CD4-positive, alpha-beta memory T cell (primary cell): ENCODE measurements at regions of chr1 and their contacts with region 1.

Region 1: DNA sequence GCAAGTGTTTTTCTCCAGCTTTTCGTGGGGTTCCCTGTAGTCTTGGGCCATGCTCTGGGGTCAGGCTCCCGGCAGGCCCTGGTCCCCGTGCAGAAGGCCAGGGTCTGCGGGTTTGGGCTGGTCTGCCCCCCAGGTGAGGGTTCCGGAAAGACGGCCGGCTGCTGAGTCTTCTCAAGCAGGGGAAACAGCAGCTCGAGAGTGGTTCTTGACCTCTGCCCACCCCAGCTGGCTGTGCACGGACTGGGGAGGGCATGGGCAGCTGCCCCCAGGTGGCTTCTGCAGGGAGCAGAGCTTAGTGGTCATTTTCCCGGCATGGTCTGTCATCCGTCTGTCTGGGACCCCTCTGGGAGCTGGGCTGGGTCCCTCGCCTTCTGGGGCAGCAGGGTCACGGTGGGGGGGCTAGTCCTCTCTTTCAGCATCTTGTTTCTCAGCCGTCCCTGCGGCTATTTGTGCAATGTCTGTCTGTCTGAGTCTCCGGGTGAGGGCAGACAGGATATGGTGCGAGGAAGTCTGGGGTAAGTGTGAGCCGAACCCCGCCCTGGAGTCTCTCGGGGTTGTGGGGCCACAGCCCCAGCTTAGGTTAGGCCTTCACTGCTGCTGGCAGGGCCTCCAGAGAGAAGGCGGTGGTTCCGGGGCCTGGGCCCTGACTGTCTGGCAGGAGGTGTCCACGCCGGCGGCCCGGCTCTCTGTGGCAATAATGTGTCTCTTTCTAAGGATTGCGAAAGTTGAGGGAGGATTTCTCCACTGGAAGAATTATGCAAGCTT is 6.1 kb downstream of the SKI start:
- DNase-seq: peak; percentile 78 to 93 (median 80)
- H3K4me3 ChIP-seq: peak overlapping the region; percentile 90 to 97
- H3K4me3 Mint-ChIP-seq: peak overlapping the region; percentile 92 to 99 (median 96)
- H3K27ac ChIP-seq: peak overlapping the region; percentile 84
- H3K27ac Mint-ChIP-seq: peak overlapping the region; percentile 94 to 100 (median 99)
- H3K4me1 ChIP-seq: peaks cover 81% of the 10 kb centered on the region
- H3K4me1 Mint-ChIP-seq: peaks cover 45 to 81% (median 61%) of the 10 kb centered on the region in 4 donors
- H3K27me3 ChIP-seq: no peaks in the 10 kb centered on the region
- H3K27me3 Mint-ChIP-seq: peaks cover 0 to 4% of the 10 kb centered on the region in 2 donors

Region 2: GRCh38 chr1:2205191-2205952 is 28.8 kb before region 1 on chr1:
- CTCF ChIA-PET with region 1: interaction called, 4 read pairs
- POLR2A ChIA-PET with region 1: interaction called, 83 read pairs
- intact Hi-C with region 1: loop called (anchors 2 kb)
- DNase-seq: peak; percentile 90 to 95 (median 91)
- H3K4me3 ChIP-seq: peak overlapping the region; percentile 6 to 47
- H3K4me3 Mint-ChIP-seq: peak overlapping the region; percentile 48 to 71 (median 68)
- H3K27ac ChIP-seq: peak overlapping the region; percentile 38
- H3K27ac Mint-ChIP-seq: peak overlapping the region in 3 of 7 donors; percentile 35 to 79 (median 62)
- H3K4me1 ChIP-seq: peaks cover 26% of the 10 kb centered on the region
- H3K4me1 Mint-ChIP-seq: peaks cover 0 to 15% (median 3%) of the 10 kb centered on the region in 4 donors
- H3K27me3 ChIP-seq: no peaks in the 10 kb centered on the region
- H3K27me3 Mint-ChIP-seq: no peaks in the 10 kb centered on the region

Region 3: DNA sequence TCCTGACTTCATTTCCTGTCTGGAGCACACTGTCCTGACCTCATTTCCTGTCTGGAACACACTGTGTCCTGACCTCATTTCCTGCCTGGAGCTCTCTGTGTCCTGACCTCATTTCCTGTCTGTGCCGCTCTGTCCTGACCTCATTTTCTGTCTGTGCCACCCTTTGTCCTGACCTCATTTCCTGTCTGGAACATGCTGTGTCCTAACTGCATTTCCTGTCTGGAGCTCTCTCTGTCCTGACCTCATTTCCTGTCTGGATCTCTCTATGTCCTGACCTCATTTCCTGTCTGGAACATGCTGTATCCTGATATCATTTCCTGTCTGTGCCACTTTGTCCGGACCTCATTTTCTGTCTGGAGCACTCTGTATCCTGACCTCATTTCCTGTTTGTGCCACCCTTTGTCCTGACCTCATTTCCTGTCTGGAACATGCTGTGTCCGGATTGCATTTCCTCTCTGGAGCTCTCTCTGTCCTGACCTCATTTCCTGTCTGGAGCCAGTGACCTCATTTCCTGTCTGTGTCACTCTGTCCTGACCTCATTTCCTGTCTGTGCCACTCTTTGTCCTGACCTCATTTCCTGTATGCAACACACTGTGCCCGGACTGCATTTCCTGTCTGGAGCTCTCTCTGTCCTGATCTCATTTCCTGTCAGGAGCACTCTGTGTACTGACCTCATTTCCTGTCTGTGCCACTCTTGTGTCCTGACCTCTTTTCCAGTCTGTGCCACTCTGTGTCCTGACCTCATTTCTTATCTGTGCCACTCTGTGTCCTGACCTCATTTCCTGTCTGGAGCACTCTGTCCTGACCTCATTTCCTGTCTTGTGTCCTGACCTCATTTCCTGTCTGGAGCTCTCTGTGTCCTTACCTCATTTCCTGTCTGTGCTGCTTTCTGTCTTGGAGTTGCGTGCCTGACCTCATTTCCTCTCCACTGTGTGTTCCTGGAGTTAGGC is 21.5 kb after region 1 on chr1:
- CTCF ChIA-PET with region 1: interaction called, 8 read pairs
- POLR2A ChIA-PET with region 1: interaction called, 454 read pairs
- intact Hi-C with region 1: loop called (anchors 1 kb)
- DNase-seq: peak; percentile 87 to 96 (median 92)
- H3K4me3 ChIP-seq: no peak overlapping the region
- H3K4me3 Mint-ChIP-seq: no peak overlapping the region
- H3K27ac ChIP-seq: peak overlapping the region; percentile 95
- H3K27ac Mint-ChIP-seq: no peak overlapping the region
- H3K4me1 ChIP-seq: peaks cover 87% of the 10 kb centered on the region
- H3K4me1 Mint-ChIP-seq: peaks cover 31 to 59% (median 40%) of the 10 kb centered on the region in 4 donors
- H3K27me3 ChIP-seq: no peaks in the 10 kb centered on the region
- H3K27me3 Mint-ChIP-seq: no peaks in the 10 kb centered on the region

Region 4: DNA sequence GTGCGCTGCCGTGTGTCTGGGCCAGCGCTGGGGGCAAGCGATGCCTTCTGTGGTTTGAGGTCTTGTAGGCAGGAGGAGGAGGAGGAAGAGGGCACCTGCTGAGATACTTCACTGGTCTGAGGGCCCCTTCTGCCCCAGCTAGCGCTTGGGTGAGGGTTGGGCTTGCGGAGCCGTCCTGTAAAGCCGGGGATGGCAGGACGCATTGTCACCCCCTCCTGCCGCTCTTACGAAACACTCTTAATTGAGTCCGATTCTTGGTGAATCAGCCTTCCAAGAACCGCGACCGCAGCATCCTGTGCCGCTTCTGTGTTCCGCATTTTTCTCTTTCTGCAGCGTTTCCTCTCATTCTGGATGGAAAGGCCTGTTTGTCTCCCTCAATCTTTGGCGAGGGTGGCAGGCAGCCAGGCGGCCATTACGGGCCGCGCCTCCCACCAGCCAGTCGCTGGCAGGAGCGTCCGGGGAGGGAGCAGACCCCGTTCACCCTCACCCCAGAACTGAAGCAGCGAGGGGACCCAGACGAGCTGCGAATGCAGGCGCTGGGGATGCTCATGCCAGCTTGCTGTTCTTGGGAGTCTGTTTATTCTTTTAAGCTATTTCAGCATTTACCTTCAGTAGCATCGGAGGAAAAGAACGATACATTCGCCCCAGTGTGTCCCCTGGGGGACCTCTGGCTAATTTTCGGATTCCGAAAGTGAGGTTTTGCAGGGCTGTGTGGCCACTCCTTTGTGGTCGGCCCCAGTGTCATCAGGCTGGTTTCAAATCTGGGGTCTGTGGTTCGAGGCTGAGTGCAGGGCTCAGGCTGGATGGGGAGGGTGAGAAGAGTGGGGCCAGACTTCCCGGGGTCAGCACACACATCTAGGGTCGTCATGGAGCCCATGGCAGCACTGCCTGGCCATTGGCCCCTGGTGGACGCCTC is 56.7 kb after region 1 on chr1:
- CTCF ChIA-PET with region 1: interaction called, 4 read pairs
- POLR2A ChIA-PET with region 1: interaction called, 71 read pairs
- intact Hi-C with region 1: loop called (anchors 2 kb)
- DNase-seq: peak; percentile 73 to 91 (median 79)
- H3K4me3 ChIP-seq: peak overlapping the region; percentile 32 to 69
- H3K4me3 Mint-ChIP-seq: peak overlapping the region; percentile 86 to 95 (median 88)
- H3K27ac ChIP-seq: peak overlapping the region; percentile 73
- H3K27ac Mint-ChIP-seq: peak overlapping the region; percentile 92 to 99 (median 98)
- H3K4me1 ChIP-seq: peaks cover 91% of the 10 kb centered on the region
- H3K4me1 Mint-ChIP-seq: peaks cover 39 to 97% (median 78%) of the 10 kb centered on the region in 4 donors
- H3K27me3 ChIP-seq: no peaks in the 10 kb centered on the region
- H3K27me3 Mint-ChIP-seq: no peaks in the 10 kb centered on the region

Region 5: DNA sequence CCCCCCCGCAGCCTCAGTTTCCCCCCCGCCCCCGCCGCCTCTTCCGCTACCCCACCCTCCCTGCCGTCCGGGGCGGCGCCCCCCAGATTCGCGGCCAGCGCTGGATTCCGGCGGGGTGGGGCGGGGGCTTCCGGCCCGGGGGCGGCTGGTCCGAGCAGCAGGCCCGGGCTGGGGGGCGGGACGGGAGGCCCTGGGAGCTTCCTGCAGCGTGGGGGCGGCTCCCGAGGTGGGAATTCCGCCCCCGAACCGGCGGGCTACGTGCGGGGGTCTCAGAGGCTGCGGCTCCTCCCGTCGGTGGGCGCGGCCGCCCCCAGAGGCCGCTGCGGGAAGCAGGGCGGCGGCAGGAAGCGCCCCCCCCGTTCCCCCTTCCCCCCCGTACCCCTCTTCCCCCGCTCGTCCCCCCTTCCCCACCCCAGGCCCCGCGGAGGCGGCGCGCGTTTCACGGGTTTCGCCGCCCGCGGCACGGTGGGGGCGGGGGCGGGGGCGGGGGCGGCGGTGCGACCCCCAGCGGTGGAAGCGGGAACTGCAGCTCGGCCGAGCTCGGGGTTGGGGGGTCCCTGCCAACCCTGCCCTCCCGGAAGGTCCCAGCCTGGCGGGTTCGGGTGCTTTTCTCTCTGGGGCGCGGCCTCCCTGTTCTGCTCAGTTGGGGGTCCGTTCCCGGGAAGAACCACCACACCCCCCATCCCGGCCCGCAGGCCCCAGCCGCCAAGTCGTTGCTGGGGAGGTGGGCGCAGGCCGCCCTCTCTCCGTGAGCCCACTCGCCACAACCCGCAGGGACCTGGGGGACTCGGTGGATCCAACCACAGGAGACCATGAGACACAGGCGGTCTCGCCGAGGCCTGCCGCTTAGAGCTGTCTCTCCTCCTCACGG is 80.9 kb after region 1 on chr1:
- CTCF ChIA-PET with region 1: interaction called, 8 read pairs
- POLR2A ChIA-PET with region 1: interaction called, 88 read pairs
- intact Hi-C with region 1: loop called (anchors 2 kb)
- DNase-seq: peak; percentile 65 to 71 (median 67)
- H3K4me3 ChIP-seq: no peak overlapping the region
- H3K4me3 Mint-ChIP-seq: peak overlapping the region in 6 of 8 donors; percentile 21 to 70 (median 55)
- H3K27ac ChIP-seq: peak overlapping the region; percentile 63
- H3K27ac Mint-ChIP-seq: peak overlapping the region in 5 of 7 donors; percentile 36 to 79 (median 74)
- H3K4me1 ChIP-seq: peaks cover 42% of the 10 kb centered on the region
- H3K4me1 Mint-ChIP-seq: peaks cover 2 to 9% (median 4%) of the 10 kb centered on the region in 4 donors
- H3K27me3 ChIP-seq: no peaks in the 10 kb centered on the region
- H3K27me3 Mint-ChIP-seq: no peaks in the 10 kb centered on the region

Region 6: DNA sequence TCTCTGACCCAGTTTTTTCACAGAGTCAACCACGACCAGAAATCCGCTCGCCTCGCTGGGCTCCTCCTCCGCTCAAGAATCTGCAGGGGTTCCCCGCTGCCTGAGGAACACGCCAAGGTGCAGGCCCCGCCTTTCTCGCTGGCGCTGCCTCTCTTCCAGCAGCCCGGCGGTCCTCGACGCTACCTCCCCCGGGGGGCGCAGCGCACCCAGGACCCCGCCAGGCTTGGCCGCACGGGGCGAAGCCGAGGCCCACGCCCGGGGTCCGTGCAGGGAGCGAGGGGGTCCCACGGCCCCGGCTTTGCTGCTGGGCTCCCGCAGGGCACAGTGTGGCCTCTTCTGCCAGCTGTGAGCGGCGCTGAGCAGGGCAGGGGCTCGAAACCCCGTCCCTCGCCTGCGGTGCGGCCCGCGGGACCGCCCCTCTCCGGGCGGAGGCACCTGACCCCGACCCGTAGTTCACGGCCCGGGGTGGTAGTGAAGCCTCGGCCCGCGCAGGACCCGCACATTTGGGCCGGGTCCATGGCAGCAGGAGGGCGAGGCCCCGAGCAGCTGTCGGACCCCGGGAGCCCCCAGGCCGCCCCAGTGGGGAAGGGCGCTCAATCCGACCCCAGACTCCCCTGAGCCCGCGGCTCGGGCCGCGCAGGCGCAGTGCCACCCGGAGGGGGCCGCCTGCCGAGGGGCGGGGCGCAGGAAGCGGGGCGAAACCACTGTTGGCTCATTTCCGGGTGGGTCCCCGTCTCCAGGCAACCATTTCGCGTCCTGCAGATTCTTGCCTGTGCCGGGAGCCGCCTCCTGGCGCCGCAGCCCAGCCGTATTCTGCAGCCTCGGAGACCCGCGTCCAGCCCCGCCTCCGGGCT is 408.6 kb after region 1 on chr1:
- CTCF ChIA-PET with region 1: no interaction called
- POLR2A ChIA-PET with region 1: no interaction called
- intact Hi-C with region 1: no loop called
- DNase-seq: peak; percentile 95 to 96 (median 95)
- H3K4me3 ChIP-seq: peak overlapping the region; percentile 69 to 83
- H3K4me3 Mint-ChIP-seq: peak overlapping the region; percentile 85 to 94 (median 88)
- H3K27ac ChIP-seq: peak overlapping the region; percentile 99
- H3K27ac Mint-ChIP-seq: peak overlapping the region; percentile 85 to 99 (median 96)
- H3K4me1 ChIP-seq: peaks cover 16% of the 10 kb centered on the region
- H3K4me1 Mint-ChIP-seq: peaks cover 2 to 21% (median 10%) of the 10 kb centered on the region in 4 donors
- H3K27me3 ChIP-seq: no peaks in the 10 kb centered on the region
- H3K27me3 Mint-ChIP-seq: no peaks in the 10 kb centered on the region